AG04450 (cell line): ENCODE measurements at regions of chr18 and their contacts with region 1.

Region 1: GRCh38 chr18:21612125-21612991 is at the start of gene SNRPD1:
- DNase-seq: peak; percentile 77
- H3K4me3 ChIP-seq: peak within 1 kb of the TSS; percentile 91
- H3K27ac ChIP-seq: peak within 1 kb of the TSS; percentile 43
- H3K27me3 ChIP-seq: no peaks in the 10 kb centered on the region
- CTCF ChIP-seq: peak; percentile 98
- polyA plus RNA-seq, gene SNRPD1: 38.8 and 43.5 TPM in 2 replicates

Region 2: DNA sequence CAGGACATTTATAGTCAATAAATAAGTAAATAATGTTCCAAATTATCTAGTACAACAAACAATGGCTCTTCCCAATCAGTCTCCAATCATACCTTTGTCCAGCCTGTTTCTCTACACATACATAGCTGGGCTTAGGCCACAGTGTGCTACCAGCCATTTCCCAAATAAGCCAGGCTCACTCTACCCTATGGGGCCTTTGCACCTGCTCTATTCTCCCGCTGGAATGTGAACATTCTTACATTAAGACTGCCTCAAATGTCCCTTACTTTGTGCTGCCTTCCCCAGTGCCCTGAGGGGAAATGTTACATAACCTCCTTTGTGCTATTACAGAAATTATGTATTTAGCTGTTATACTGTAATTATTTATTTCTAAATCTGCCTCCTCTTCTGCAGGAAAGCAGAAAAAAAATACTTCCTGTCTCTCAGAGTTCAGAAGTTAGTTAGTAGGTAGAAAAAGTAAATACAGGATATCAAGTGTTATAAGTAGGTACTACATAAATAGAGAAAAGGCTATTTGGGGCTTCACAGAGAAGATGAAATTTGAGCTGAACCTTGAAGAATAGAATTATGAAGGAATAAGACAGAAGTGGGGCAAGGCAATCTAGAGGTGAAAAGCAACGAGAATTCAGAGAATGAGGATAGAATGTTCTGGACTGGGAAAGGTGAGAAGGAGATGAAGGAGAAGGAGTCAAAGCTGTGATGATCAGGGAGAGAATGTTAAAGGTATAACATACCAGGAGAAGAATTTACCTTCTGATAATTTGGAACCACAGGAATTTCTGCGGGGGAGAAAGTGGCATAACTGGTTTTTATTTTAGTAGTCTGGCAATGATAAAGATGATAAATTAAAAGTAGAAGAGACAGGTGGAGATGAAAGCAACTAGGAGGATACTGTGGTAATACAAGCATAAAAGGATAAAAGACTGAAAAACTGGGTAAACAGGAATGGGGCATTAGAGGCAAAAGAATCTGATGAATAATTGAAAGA is 537.7 kb before region 1 on chr18:
- CTCF ChIA-PET with region 1: interaction called, 10 read pairs
- POLR2A ChIA-PET with region 1: no interaction called
- DNase-seq: no peak
- H3K4me3 ChIP-seq: no peak overlapping the region
- H3K27ac ChIP-seq: no peak overlapping the region
- H3K27me3 ChIP-seq: no peaks in the 10 kb centered on the region
- CTCF ChIP-seq: no peak

Region 3: GRCh38 chr18:21203096-21203495 is 409.3 kb before region 1 on chr18:
- CTCF ChIA-PET with region 1: no interaction called
- POLR2A ChIA-PET with region 1: no interaction called
- DNase-seq: no peak
- H3K4me3 ChIP-seq: no peak overlapping the region
- H3K27ac ChIP-seq: no peak overlapping the region
- H3K27me3 ChIP-seq: no peaks in the 10 kb centered on the region
- CTCF ChIP-seq: no peak

Region 4: GRCh38 chr18:21629089-21629832 is 16.9 kb after region 1 on chr18:
- CTCF ChIA-PET with region 1: interaction called, 14 read pairs
- POLR2A ChIA-PET with region 1: no interaction called
- DNase-seq: no peak
- H3K4me3 ChIP-seq: no peak overlapping the region
- H3K27ac ChIP-seq: no peak overlapping the region
- H3K27me3 ChIP-seq: no peaks in the 10 kb centered on the region
- CTCF ChIP-seq: no peak